ENCODE measurements at regions of chr15 and their contacts with region 1.

Region 1: GRCh38 chr15:98421419-98422129 is 226.8 kb upstream of the IGF1R start:
- DNase-seq: peak; percentile 59
- H3K4me3 ChIP-seq: peak overlapping the region; percentile 6
- H3K27ac ChIP-seq: no peak overlapping the region
- H3K4me1 ChIP-seq: peaks cover 4% of the 10 kb centered on the region
- H3K27me3 ChIP-seq: no peaks in the 10 kb centered on the region
- CTCF ChIP-seq: peak; percentile 99

Region 2: DNA sequence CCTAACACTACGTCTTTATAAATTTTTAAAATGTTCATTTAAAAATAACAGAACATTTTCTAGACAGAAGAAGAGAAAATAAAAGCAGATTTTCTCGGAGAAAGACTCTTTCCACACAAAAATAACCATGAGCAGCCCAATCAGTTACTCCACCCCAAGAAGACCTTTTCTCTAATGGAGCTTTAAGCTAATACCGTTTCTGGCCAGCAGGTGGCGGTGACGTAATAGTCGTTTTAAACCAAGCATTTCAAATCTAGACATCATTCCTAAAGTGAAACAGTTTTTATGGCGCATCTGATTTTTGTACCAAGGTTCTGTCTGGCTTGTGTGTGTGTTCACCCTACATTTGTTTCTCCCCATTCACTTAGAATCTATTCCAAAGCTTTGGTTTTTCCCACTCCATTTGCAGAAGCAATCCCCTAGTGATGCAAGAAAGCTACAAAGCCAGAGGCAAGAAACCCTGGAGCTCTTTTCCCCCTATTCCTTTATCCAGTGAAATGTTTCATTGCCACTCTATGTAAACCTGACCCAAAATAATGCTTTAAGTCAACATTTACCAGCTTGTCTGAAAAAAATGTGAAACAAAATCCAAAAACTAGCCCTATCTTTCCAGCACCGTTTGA is 109.9 kb before region 1 on chr15:
- intact Hi-C with region 1: loop called (anchors 2 kb)
- DNase-seq: peak; percentile 84
- H3K4me3 ChIP-seq: no peak overlapping the region
- H3K27ac ChIP-seq: no peak overlapping the region
- H3K4me1 ChIP-seq: no peaks in the 10 kb centered on the region
- H3K27me3 ChIP-seq: no peaks in the 10 kb centered on the region
- CTCF ChIP-seq: peak; percentile 88

Region 3: GRCh38 chr15:98493917-98494511 is 72.4 kb after region 1 on chr15:
- intact Hi-C with region 1: no loop called
- DNase-seq: no peak
- H3K4me3 ChIP-seq: no peak overlapping the region
- H3K27ac ChIP-seq: no peak overlapping the region
- H3K4me1 ChIP-seq: no peaks in the 10 kb centered on the region
- H3K27me3 ChIP-seq: no peaks in the 10 kb centered on the region
- CTCF ChIP-seq: no peak